ENCODE measurements at regions of chr10 and their contacts with region 1.

Region 1: DNA sequence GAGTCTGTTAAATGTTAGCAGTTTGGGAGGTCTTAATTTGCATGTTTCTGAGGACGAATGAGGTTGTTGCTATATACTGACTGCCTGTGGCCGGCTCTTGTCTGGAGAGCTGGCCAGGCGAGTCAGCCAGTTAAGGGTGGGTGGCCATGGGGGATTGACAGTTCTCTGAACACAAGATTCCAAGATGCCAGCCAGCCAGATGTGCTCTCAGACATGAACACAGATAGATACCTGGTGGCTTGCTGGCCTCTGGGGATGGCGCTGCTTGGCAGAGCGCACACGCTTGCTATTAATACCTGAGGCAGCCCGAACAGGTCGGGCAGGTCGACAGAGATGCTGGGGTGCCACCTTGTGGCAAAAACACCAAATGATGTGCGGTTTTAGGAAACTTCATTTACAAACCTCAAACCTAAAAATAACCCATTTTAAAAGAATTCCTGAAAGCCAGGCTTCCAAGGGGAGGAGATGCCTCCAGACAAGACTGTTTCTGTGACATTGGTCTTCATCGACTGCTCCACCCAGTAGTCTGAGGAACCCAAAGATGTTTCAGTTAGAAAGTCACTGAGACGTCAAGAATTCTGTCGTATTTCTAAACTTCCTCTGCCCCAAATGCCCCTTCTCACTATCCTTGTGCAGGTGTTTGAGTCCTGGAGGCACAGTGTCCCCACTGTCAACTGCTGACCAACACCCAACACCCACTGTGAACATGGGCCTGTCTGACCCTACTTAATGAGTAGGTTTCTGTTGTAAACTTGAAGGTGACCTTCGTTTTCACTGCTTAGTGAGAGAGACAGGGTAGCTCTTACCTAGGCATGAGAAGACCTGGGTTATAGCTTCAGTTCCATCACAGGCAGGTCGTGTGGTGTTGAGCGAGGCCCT is 123.4 kb downstream of the NT5C2 start:
- DNase-seq: peak; percentile 59 to 85 (median 68)
- ATAC-seq: peak; percentile 94
- H3K4me3 ChIP-seq: no peak overlapping the region
- H3K4me3 Mint-ChIP-seq: no peak overlapping the region
- H3K27ac ChIP-seq: no peak overlapping the region
- H3K27ac Mint-ChIP-seq: peak overlapping the region; percentile 61
- H3K4me1 ChIP-seq: peaks cover 19% of the 10 kb centered on the region
- H3K4me1 Mint-ChIP-seq: peaks cover 25% of the 10 kb centered on the region
- H3K27me3 ChIP-seq: no peaks in the 10 kb centered on the region
- H3K27me3 Mint-ChIP-seq: no peaks in the 10 kb centered on the region
- CTCF ChIP-seq: peak; percentile 65

Region 2: DNA sequence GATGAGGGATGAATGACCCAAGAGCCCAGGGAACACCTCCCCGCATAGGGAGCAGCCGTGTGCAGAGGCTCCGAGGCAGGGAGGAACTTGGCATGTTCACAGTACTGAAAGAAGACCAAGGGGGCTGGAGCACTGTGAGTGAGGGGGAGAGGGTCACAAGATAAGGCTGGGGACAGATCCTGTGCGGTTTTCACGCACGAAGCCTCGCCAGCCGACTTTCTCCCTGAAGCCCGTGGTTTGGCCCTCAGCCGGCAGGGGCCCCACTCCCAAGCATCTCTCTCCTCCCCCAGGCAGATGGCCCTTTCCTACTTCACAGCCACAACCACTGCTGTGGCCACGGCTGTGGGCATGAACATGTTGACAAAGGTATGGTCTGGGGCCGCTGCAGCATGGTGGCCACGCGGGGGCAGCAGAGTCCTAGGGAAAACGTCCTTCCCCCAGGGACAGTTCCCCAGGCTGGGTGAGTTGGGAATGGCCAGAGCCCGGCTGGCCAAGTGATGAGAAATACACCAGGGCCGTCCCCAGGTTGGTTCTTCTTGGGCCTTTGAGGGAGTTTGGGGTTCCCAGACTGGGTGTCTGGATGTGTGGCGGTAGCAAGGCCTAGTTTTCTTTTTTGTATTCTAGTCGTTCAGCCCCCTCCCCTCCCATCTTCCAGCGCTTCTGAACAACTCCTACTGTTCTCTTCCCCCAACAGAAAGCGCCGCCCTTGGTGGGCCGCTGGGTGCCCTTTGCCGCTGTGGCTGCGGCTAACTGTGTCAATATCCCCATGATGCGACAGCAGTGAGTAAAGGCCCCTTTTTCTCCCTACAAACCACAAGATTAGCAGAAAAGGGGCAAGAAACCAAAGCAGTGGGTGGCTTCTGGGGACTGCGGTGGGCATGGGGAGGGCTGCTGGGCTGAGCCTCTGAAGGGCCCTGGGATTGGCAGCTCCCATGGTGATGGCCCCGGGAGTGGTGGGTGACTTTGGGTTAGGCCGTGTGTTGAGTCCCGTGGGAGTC is 340.4 kb before region 1 on chr10:
- CTCF ChIA-PET with region 1: no interaction called
- POLR2A ChIA-PET with region 1: no interaction called
- intact Hi-C with region 1: loop called in 1 of 2 experiments (anchors 10 kb)
- DNase-seq: peak; percentile 26 to 74 (median 45)
- ATAC-seq: peak; percentile 57
- H3K4me3 ChIP-seq: no peak overlapping the region
- H3K4me3 Mint-ChIP-seq: no peak overlapping the region
- H3K27ac ChIP-seq: no peak overlapping the region
- H3K27ac Mint-ChIP-seq: no peak overlapping the region
- H3K4me1 ChIP-seq: peaks cover 4% of the 10 kb centered on the region
- H3K4me1 Mint-ChIP-seq: peaks cover 8% of the 10 kb centered on the region
- H3K27me3 ChIP-seq: no peaks in the 10 kb centered on the region
- H3K27me3 Mint-ChIP-seq: no peaks in the 10 kb centered on the region
- CTCF ChIP-seq: peak; percentile 69

Region 3: DNA sequence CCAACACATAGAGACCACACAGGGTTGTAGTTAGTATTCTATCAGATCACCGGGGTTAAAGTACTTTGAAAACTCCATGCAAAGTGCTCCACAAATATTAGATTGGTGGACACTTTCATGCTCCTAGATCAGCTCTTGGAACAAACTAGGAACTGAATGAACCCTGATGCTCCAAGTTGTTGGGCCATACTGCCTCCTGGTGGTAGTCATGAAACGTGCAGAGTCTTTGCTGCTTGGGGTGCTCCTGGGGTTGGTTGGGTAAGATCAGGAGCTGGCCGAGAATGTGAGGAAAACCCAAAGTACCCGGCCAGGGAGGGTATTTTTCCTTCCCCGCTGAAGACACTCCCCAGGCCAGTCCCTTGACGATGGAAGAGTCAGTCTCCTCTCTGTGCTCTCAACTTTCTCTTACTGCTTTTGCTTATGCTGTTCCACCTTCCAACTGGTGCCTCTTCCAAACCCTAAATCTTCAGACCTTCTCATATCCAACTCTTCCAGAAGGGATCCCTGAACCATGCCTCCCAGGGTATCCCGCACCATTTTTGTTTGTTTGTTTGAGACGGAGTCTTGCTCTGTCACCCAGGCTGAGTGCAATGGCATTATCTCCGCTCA is 175.1 kb after region 1 on chr10:
- CTCF ChIA-PET with region 1: no interaction called
- POLR2A ChIA-PET with region 1: no interaction called
- intact Hi-C with region 1: loop called in 1 of 2 experiments (anchors 10 kb)
- DNase-seq: peak; percentile 41 to 82 (median 52)
- ATAC-seq: peak; percentile 60
- H3K4me3 ChIP-seq: no peak overlapping the region
- H3K4me3 Mint-ChIP-seq: no peak overlapping the region
- H3K27ac ChIP-seq: no peak overlapping the region
- H3K27ac Mint-ChIP-seq: no peak overlapping the region
- H3K4me1 ChIP-seq: peaks cover 7% of the 10 kb centered on the region
- H3K4me1 Mint-ChIP-seq: peaks cover 6% of the 10 kb centered on the region
- H3K27me3 ChIP-seq: peaks cover 0 to 2% of the 10 kb centered on the region in 2 experiments
- H3K27me3 Mint-ChIP-seq: no peaks in the 10 kb centered on the region
- CTCF ChIP-seq: peak; percentile 83

Measured in CD4-positive, alpha-beta T cell (primary cell).